SK-N-SH (cell line): ENCODE measurements at regions of chr1 and their contacts with region 1.

Region 1: GRCh38 chr1:181189691-181190363 is 101.3 kb downstream of the IER5 start:
- DNase-seq: peak; percentile 92
- H3K4me3 ChIP-seq: peak overlapping the region; percentile 32 to 62
- H3K27ac ChIP-seq: no peak overlapping the region
- H3K4me1 ChIP-seq: no peaks in the 10 kb centered on the region; a peak in 1 of 4 replicates
- H3K27me3 ChIP-seq: peaks cover 6% of the 10 kb centered on the region; the same call in 1 of the 2 replicates
- CTCF ChIP-seq: peak; percentile 96
- EP300 ChIP-seq: no peak
- RAD21 ChIP-seq: peak; percentile 86

Region 2: DNA sequence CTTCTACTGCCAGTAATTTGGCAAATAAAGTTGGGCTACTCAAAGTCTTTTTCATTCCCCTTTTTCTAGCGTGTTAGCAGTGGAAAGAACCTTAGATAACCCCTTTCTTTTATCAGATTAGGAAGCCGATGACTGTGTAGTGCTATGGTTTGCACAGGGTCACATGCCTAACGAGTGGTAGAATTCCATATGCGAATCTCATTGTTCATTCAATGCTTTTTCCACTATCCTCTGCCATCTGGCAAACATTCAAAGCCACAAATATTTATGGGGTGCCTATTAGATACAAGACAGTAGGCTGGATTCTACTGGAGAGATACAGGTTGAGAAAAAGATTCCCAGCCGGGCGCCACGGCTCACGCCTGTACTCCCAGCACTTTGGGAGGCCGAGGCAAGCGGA is 116.2 kb before region 1 on chr1:
- CTCF ChIA-PET with region 1: no interaction called
- POLR2A ChIA-PET with region 1: no interaction called
- DNase-seq: no peak
- H3K4me3 ChIP-seq: no peak overlapping the region
- H3K27ac ChIP-seq: peak overlapping the region; percentile 61 to 75; a peak in 3 of 4 replicates
- H3K4me1 ChIP-seq: peaks cover 8 to 16% of the 10 kb centered on the region in 2 experiments; a peak in 3 of 4 replicates
- H3K27me3 ChIP-seq: no peaks in the 10 kb centered on the region
- CTCF ChIP-seq: no peak
- EP300 ChIP-seq: peak; percentile 54 to 88; a peak in 3 of 4 replicates
- RAD21 ChIP-seq: no peak

Region 3: DNA sequence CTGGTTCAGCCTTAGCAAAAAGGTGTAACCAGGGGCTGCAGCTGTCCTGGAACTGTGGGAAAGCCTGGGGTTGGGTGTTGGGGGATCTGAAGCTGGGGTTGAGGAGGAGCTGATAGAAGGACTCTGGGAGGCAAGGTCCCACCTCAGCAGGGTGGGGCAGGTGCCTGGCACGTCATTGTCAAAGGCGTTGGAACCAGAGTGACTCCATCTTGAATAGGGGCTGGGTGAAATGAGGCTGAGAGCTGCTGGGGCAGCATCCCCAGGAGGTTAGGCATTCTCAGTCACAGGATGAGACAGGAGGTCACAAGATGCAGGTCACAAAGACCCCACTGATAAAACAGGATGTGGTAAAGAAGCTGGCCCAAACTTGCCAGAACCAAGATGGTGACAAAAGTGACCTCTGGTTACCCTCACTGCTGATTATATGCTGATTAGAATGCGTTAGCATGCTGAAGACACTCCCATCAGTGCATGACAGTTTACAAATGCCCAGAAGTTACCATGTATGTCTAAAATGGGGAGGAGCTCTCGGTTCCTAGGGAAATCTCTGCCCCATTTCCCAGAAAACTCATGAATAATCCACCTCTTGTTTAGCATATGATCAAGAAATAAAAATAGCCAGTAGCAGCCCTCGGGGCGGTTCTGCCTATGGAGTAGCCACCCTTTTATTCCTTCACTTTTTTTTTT is 15.9 kb before region 1 on chr1:
- CTCF ChIA-PET with region 1: interaction called, 26 read pairs
- POLR2A ChIA-PET with region 1: no interaction called
- DNase-seq: no peak
- H3K4me3 ChIP-seq: no peak overlapping the region
- H3K27ac ChIP-seq: no peak overlapping the region
- H3K4me1 ChIP-seq: peaks cover 0 to 5% of the 10 kb centered on the region in 2 experiments; a peak in 2 of 4 replicates
- H3K27me3 ChIP-seq: no peaks in the 10 kb centered on the region; the same call in 1 of the 2 replicates
- CTCF ChIP-seq: no peak
- EP300 ChIP-seq: no peak
- RAD21 ChIP-seq: no peak

Region 4: GRCh38 chr1:181383702-181384101 is 193.9 kb after region 1 on chr1:
- CTCF ChIA-PET with region 1: interaction called, 11 read pairs
- POLR2A ChIA-PET with region 1: no interaction called
- DNase-seq: no peak
- H3K4me3 ChIP-seq: no peak overlapping the region
- H3K27ac ChIP-seq: no peak overlapping the region
- H3K4me1 ChIP-seq: no peaks in the 10 kb centered on the region
- H3K27me3 ChIP-seq: no peaks in the 10 kb centered on the region
- CTCF ChIP-seq: no peak
- EP300 ChIP-seq: no peak
- RAD21 ChIP-seq: no peak

Region 5: GRCh38 chr1:181416268-181416860 is 226.5 kb after region 1 on chr1:
- CTCF ChIA-PET with region 1: interaction called, 47 read pairs
- POLR2A ChIA-PET with region 1: no interaction called
- DNase-seq: no peak
- H3K4me3 ChIP-seq: no peak overlapping the region
- H3K27ac ChIP-seq: no peak overlapping the region
- H3K4me1 ChIP-seq: no peaks in the 10 kb centered on the region
- H3K27me3 ChIP-seq: no peaks in the 10 kb centered on the region
- CTCF ChIP-seq: no peak
- EP300 ChIP-seq: no peak
- RAD21 ChIP-seq: no peak

Region 6: GRCh38 chr1:181430015-181430885 is 240.4 kb after region 1 on chr1:
- CTCF ChIA-PET with region 1: interaction called, 134 read pairs
- POLR2A ChIA-PET with region 1: no interaction called
- DNase-seq: no peak
- H3K4me3 ChIP-seq: no peak overlapping the region
- H3K27ac ChIP-seq: no peak overlapping the region
- H3K4me1 ChIP-seq: no peaks in the 10 kb centered on the region
- H3K27me3 ChIP-seq: no peaks in the 10 kb centered on the region; the same call in 1 of the 2 replicates
- CTCF ChIP-seq: no peak
- EP300 ChIP-seq: no peak
- RAD21 ChIP-seq: no peak